ENCODE measurements at regions of chr10 and their contacts with region 1.

Region 1: DNA sequence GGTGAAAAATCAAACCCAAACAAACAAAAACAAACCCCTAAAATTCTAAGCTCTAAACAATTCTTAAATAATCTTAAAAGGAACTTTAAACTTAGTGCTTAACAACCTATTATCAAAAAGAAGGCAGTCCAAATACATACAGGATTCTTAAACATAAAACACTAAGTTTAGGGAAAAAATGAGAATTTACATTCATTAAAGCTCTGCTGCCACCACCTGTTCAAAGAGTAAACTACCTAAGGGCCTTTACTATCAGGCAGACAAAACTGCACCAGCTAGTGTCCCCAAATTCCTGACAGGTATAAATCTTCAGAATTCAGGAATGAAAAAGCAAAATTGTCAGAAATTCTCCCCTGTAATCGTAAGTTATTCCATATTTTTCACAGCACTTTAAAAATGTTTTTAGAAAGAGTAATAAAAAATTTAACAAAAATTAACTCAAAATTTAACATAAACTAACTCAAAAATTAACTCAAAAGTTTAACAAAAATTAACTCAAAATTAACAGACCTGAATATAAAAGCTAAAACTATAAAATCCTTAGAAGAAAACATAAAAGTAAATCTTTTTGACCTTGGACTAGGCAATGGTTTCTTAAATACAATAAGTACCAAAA is 55.1 kb downstream of the PDZD8 start:
- DNase-seq: peak; percentile 30 to 35
- ATAC-seq: peak; percentile 47 to 75; a peak in 3 of 6 replicates
- H3K4me3 ChIP-seq: no peak overlapping the region
- H3K27ac ChIP-seq: no peak overlapping the region
- H3K4me1 ChIP-seq: peaks cover 40% of the 10 kb centered on the region
- CTCF ChIP-seq: peak; percentile 76
- EP300 ChIP-seq: no peak
- POLR2A ChIP-seq: no peak
- RAD21 ChIP-seq: peak; percentile 64 to 70

Region 2: DNA sequence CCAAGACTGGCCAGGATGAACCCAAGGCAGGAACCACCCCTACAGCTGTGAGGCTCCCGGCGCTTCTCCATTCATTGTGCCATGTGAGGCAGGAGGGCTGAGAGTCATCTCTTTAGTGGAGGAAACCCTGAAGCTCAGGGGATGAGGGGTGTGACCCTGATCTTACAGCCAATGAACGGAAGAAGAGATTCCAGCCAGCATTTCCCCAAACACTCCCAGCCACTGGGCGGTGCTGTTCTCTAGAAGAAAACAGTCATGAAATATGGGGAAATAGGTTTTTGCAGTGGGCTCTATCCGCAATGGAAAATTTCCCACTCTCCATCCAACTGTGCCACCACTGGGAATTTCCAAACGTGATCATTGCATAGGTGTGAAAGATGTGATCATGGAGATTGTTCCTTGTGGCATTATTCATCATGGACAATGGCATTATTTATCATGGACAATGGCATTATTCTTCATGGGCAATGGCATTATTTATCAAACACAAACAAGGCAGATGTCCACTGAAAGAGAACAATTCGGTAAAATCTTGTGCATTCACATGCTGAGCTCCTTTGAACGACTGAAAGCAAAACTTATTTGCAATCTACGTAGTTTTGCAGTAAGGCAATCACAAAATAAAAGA is 93.2 kb before region 1 on chr10:
- CTCF ChIA-PET with region 1: interaction called, 43 read pairs
- POLR2A ChIA-PET with region 1: no interaction called
- DNase-seq: peak; percentile 61 to 72
- ATAC-seq: peak in 1 of 2 experiments; percentile 91; a peak in 3 of 6 replicates
- H3K4me3 ChIP-seq: no peak overlapping the region
- H3K27ac ChIP-seq: no peak overlapping the region
- H3K4me1 ChIP-seq: peaks cover 9% of the 10 kb centered on the region
- CTCF ChIP-seq: peak; percentile 50
- EP300 ChIP-seq: no peak
- POLR2A ChIP-seq: no peak
- RAD21 ChIP-seq: peak; percentile 50 to 78

Region 3: DNA sequence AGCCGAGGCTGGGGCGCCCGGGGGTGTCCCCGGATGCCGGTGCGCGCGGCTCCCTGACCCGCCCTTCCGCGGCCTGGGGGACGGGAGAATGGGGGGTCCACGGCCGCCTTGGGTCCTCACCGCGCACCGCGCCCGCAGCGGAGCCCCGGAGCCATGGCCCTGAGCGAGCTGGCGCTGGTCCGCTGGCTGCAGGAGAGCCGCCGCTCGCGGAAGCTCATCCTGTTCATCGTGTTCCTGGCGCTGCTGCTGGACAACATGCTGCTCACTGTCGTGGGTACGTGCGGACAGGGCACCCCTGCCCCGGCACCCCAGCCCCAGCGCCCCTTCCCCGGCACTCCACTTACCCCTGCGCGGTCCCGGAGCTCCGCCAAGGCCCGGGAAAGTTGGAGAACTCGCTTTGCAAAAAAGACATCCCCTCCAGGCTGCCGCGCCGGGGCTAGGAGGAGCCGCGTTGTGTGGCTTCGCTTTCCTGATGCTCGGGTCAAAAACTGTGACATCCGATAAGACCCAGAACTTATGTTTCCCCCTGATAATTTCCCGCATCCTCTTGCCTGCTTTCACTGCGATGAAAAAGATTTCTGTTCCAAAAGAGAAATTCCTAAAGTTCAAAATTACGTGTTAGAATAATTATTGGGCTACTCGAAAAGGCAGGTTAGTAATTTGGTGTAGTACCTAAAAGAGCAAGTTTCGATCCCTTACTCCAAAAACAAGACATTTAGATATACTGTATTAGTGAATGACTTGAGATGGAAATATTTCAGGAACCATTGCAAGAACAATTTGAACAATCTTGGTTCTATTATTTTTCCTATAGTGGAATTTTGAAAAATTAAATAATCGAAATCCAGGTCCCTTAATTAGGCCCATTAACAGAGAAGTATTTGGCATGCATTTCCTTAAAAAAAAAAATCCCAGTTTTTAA is 78.4 kb before region 1 on chr10:
- CTCF ChIA-PET with region 1: interaction called, 11 read pairs
- POLR2A ChIA-PET with region 1: no interaction called
- DNase-seq: no peak
- ATAC-seq: peak; percentile 45 to 66; a peak in 3 of 6 replicates
- H3K4me3 ChIP-seq: peak overlapping the region; percentile 47
- H3K27ac ChIP-seq: peak overlapping the region in 1 of 2 experiments; percentile 40; a peak in 2 of 6 replicates
- H3K4me1 ChIP-seq: 0 out of 3 replicates have a peak, but pooled peaks cover 3% of the 10 kb centered on the region
- CTCF ChIP-seq: no peak
- EP300 ChIP-seq: no peak
- POLR2A ChIP-seq: no peak
- RAD21 ChIP-seq: no peak

Region 4: GRCh38 chr10:117306674-117307073 is 13.5 kb before region 1 on chr10:
- CTCF ChIA-PET with region 1: interaction called, 25 read pairs
- POLR2A ChIA-PET with region 1: no interaction called
- DNase-seq: no peak
- ATAC-seq: no peak
- H3K4me3 ChIP-seq: no peak overlapping the region
- H3K27ac ChIP-seq: no peak overlapping the region
- H3K4me1 ChIP-seq: peaks cover 1% of the 10 kb centered on the region; the same call in 1 of the 3 replicates
- CTCF ChIP-seq: no peak
- EP300 ChIP-seq: no peak
- POLR2A ChIP-seq: no peak
- RAD21 ChIP-seq: no peak

Region 5: DNA sequence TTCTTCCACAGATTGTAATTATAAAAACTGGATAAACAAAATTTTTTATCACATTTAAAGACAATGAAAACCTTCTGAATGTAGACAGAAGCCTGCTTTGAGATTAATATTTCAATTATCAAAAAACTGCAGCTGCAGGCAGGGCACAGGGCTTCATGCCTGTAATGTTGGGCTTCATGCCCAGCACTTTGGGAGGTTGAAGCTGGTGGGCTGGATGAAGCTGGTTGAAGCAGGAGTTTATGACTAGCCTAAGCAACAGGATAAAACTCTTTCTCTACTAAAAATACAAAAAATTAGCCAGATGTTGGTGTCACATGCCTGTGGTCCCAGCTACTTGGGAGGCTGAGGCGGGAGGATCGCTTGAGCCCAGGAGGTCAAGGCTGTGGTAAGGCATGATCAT is 13.9 kb after region 1 on chr10:
- CTCF ChIA-PET with region 1: interaction called, 14 read pairs
- POLR2A ChIA-PET with region 1: no interaction called
- DNase-seq: no peak
- ATAC-seq: no peak
- H3K4me3 ChIP-seq: no peak overlapping the region
- H3K27ac ChIP-seq: no peak overlapping the region
- H3K4me1 ChIP-seq: peaks cover 23% of the 10 kb centered on the region
- CTCF ChIP-seq: no peak
- EP300 ChIP-seq: no peak
- POLR2A ChIP-seq: no peak
- RAD21 ChIP-seq: no peak

Region 6: DNA sequence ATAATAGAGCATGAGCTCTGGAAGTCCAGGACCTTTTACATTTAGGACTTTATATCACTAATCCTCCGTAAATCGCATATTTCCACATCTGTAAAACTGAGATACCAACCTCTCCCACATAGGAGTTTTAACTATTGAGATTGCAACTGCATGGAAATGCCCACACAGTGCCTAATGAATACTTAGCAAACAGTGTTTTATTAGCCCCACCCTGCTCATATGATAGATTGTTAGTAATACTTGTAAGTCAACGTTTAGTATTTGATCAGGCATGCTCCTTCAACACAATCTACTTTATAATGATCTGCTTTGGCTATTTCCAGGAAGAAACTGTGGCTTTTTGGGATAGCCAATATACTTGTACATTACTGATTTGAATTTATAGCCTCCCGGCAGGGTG is 46.6 kb after region 1 on chr10:
- CTCF ChIA-PET with region 1: interaction called, 14 read pairs
- POLR2A ChIA-PET with region 1: no interaction called
- DNase-seq: no peak
- ATAC-seq: no peak; a peak in 1 of 6 replicates
- H3K4me3 ChIP-seq: peak overlapping the region; percentile 33
- H3K27ac ChIP-seq: peak overlapping the region; percentile 89 to 92
- H3K4me1 ChIP-seq: peaks cover 86% of the 10 kb centered on the region
- CTCF ChIP-seq: no peak
- EP300 ChIP-seq: no peak
- POLR2A ChIP-seq: no peak
- RAD21 ChIP-seq: no peak

Region 7: DNA sequence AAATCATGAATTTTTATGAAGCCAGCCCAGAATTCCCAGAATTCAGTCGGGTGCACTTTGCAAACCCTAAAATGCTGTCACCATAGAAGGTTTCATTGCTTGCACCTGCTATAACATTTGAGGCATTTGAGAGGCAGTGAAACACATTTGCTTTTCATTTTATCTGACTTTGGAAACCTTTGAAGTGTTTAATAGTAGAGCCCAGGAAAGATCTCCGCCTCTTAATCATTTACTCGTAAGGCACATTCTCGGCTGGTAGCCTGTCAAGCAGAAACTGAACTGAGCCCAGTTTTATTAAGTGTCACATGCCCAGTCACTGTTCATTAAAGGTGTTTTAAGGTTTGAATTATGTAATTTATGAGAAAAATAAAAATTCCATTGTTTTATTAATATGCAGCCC is 470.0 kb after region 1 on chr10:
- CTCF ChIA-PET with region 1: no interaction called
- POLR2A ChIA-PET with region 1: no interaction called
- DNase-seq: no peak
- ATAC-seq: no peak
- H3K4me3 ChIP-seq: no peak overlapping the region
- H3K27ac ChIP-seq: no peak overlapping the region
- H3K4me1 ChIP-seq: no peaks in the 10 kb centered on the region
- CTCF ChIP-seq: no peak
- EP300 ChIP-seq: no peak
- POLR2A ChIP-seq: no peak
- RAD21 ChIP-seq: no peak